ENCODE measurements at regions of chr4 and their contacts with region 1.

Region 1: DNA sequence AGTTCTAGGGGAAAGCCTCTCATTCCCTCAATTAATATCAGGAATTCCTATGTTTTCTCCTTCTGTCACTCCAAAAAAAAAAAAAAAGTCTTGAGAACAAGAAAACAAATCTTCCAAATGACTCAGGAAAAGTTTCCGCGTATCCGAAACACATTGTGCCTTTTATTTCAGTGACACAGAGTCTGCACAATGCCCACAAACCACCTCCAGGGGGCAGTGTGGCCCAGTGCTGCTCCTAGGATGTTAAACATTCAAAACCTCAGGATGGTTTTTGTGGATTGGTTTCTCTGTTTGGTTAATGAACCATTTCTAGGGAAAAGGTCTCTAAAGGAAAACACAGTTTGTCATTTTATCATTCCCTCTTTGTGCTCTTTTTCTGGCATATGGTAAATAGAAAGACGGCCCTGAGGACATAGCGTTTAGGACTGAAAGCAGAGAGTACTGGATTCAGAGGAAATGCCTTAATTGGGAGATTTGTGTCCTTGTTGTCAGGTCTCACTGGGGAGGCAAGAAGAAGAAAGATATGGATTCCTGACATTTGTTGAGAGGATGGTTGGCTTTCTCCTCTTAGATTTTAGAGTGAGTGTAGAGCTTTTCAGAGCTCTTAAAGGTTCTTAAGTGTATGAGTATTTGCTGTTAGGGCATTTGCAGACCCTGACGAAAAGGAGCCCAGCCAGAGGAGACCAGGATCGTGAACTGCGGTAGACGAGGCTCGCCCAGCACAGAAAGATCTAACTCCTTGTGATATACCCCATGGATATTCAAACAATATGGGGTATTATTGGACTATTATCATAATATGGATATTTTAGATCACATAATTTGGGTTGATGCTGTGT is 65.7 kb upstream of the MAP9 start:
- DNase-seq: peak; percentile 49 to 92 (median 83)
- H3K4me3 ChIP-seq: peak overlapping the region in 28 of 59 donors; percentile 2 to 48 (median 30)
- H3K27ac ChIP-seq: peak overlapping the region in 28 of 59 donors; percentile 4 to 70 (median 44)
- H3K27me3 ChIP-seq: peaks cover 0 to 11% (median 0%) of the 10 kb centered on the region in 45 donors
- CTCF ChIP-seq: peak; percentile 87 to 99 (median 94)

Region 2: DNA sequence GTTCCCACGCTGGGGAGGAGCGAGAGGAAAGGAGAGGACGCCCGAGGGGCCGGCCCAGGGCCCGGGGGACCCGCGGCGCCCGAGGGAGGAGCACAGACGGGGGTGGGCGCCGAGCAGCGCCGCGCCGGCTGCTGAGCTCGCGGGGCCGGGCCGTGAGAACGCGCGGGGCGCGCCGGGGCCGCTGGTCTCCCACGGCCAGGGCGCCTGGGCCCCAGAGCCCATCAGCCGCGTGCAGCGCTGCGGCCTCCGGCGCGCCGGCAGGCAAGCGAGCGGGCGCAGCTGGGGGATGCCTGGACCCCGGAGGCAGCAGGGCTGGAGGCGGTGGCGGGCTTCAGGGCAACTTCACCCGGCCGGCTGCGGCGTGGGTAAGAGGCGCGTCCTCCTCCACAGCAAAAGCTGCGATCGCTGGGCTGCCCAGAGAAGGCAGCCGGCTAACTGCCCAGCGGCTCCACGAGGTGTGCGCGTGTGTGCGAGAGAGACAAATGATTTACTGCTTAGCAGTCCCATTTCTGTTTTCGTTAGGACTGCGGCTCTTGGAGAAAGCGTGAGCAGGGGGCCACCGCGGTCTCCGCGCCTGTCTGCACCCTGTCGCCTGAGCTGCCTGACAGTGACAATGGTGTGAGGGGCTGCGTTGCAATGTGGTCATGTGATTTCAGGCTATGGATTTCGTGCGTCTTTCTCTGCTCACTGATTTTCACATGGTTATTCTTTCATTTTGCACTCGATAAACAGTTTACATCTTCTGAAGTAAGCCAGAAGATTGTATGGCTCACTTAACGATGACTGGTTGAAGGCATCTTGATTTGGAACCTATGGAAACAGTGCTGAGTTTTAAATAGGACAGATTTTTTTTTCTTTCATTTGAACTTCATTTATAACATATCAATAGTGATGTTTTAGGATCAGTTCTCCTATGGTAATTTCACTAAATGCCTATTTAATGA is 225.4 kb after region 1 on chr4:
- intact Hi-C with region 1: loop called in 1 of 2 experiments (anchors 5 kb)
- DNase-seq: peak in 8 of 10 donors; percentile 29 to 64 (median 37)
- H3K4me3 ChIP-seq: peak overlapping the region; percentile 33 to 87 (median 69)
- H3K27ac ChIP-seq: peak overlapping the region in 58 of 59 donors; percentile 32 to 94 (median 86)
- H3K27me3 ChIP-seq: peaks cover 0 to 10% (median 0%) of the 10 kb centered on the region in 45 donors
- CTCF ChIP-seq: no peak

Region 3: DNA sequence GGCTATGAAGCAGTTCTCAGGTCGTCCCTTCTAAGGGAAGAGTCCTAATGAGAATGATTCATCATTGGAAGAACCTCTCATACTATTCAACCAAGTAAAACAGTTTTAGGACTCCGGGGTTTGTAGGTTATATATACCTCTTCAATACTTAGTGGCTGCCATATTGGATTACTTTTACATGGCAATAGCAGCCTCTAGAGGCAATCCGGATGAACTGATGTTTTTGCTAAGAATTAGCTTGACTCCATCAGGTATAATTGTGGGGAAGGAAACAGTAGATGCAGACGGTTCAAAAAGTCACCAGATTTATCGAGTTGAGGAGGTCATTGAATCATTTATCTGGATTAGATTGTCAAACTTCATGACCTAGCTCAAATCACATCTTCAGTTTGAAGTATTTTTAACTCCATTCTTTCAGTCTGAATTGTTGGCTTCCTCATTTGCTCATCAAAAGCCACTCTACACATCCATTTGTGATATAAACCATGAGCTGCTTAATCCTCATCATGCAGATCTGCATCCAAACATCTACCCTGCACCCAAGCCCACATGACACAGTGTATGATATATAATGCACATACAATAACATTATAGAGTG is 344.7 kb after region 1 on chr4:
- intact Hi-C with region 1: loop called (anchors 2 to 5 kb)
- DNase-seq: no peak
- H3K4me3 ChIP-seq: no peak overlapping the region
- H3K27ac ChIP-seq: peak overlapping the region in 4 of 59 donors; percentile 10 to 79 (median 45)
- H3K27me3 ChIP-seq: no peaks in the 10 kb centered on the region
- CTCF ChIP-seq: peak in 55 of 56 donors; percentile 39 to 84 (median 63)